Activated B cell treated with CpG ODN at 0.5 μM for 24 hours (primary cell): ENCODE measurements at regions of chr10 and their contacts with region 1.

Region 1: GRCh38 chr10:73653701-73654335 is 2.0 kb downstream of the SYNPO2L start:
- DNase-seq: no peak
- ATAC-seq: no peak
- H3K4me3 Mint-ChIP-seq: no peak overlapping the region
- H3K27ac Mint-ChIP-seq: no peak overlapping the region
- H3K4me1 Mint-ChIP-seq: peaks cover 8% of the 10 kb centered on the region
- H3K27me3 Mint-ChIP-seq: no peaks in the 10 kb centered on the region
- CTCF ChIP-seq: no peak

Region 2: GRCh38 chr10:73485320-73485719 is 168.5 kb before region 1 on chr10:
- CTCF ChIA-PET with region 1: no interaction called
- POLR2A ChIA-PET with region 1: no interaction called
- intact Hi-C with region 1: no loop called
- DNase-seq: no peak
- ATAC-seq: no peak
- H3K4me3 Mint-ChIP-seq: no peak overlapping the region
- H3K27ac Mint-ChIP-seq: no peak overlapping the region
- H3K4me1 Mint-ChIP-seq: peaks cover 16% of the 10 kb centered on the region
- H3K27me3 Mint-ChIP-seq: no peaks in the 10 kb centered on the region
- CTCF ChIP-seq: no peak

Region 3: DNA sequence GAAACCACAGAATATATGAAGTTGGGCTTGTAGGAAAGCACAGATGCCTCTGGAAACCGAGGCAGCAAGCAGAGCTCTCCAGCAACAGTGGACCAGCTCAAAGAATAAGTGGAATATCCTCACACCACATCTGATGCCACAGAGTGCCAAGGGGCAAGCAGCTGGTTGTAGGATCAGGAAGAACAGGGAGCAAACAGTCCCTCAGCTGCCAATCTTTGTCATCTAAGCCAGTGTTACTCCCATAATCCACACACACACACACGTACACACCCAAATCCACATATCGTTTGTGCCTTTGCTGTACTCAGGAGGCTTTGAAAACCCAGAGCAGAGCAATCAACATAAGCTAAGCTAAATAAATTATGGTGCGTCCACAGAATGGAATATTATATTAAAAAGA is 69.7 kb after region 1 on chr10:
- CTCF ChIA-PET with region 1: no interaction called
- POLR2A ChIA-PET with region 1: interaction called, 12 read pairs
- intact Hi-C with region 1: no loop called
- DNase-seq: no peak
- ATAC-seq: no peak
- H3K4me3 Mint-ChIP-seq: no peak overlapping the region
- H3K27ac Mint-ChIP-seq: no peak overlapping the region
- H3K4me1 Mint-ChIP-seq: no peaks in the 10 kb centered on the region
- H3K27me3 Mint-ChIP-seq: no peaks in the 10 kb centered on the region
- CTCF ChIP-seq: no peak